ENCODE measurements at regions of chr2 and their contacts with region 1.

Region 1: GRCh38 chr2:9555297-9556141 is at the start of gene ADAM17:
- DNase-seq: peak; percentile 93
- H3K4me3 Mint-ChIP-seq: peak within 1 kb of the TSS; percentile 100
- H3K27ac Mint-ChIP-seq: peak within 1 kb of the TSS; percentile 98
- H3K4me1 Mint-ChIP-seq: peaks cover 50% of the 10 kb centered on the region
- H3K27me3 Mint-ChIP-seq: no peaks in the 10 kb centered on the region
- total RNA-seq, gene ADAM17: 24.0 to 24.7 TPM

Region 2: GRCh38 chr2:9373077-9373875 is 182.2 kb before region 1 on chr2:
- CTCF ChIA-PET with region 1: no interaction called
- POLR2A ChIA-PET with region 1: no interaction called
- intact Hi-C with region 1: loop called (anchors 1 kb)
- DNase-seq: no peak
- H3K4me3 Mint-ChIP-seq: no peak overlapping the region
- H3K27ac Mint-ChIP-seq: no peak overlapping the region
- H3K4me1 Mint-ChIP-seq: peaks cover 20% of the 10 kb centered on the region
- H3K27me3 Mint-ChIP-seq: peaks cover 9% of the 10 kb centered on the region

Region 3: DNA sequence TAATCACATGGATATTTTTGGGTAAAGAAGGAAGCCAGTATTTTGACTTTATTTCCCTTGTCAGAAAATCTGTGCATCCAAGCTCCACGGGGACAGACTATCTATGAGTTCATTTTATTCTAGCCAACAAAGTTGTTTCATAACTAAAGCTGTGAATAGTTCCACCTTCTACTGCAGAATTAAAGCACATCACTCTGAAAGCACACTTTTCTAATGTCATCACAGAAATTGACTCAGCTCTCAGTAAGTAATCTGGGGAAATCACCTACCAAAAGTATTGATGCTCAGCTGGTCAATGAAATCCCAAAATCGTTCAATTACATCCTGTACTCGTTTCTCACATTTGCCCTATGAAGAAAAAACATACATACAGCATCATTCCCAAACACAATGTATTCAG is 62.0 kb before region 1 on chr2:
- CTCF ChIA-PET with region 1: interaction called, 3 read pairs
- POLR2A ChIA-PET with region 1: interaction called, 8 read pairs
- intact Hi-C with region 1: loop called (anchors 1 kb)
- DNase-seq: no peak
- H3K4me3 Mint-ChIP-seq: no peak overlapping the region
- H3K27ac Mint-ChIP-seq: peak overlapping the region; percentile 80
- H3K4me1 Mint-ChIP-seq: peaks cover 52% of the 10 kb centered on the region
- H3K27me3 Mint-ChIP-seq: no peaks in the 10 kb centered on the region

Region 4: DNA sequence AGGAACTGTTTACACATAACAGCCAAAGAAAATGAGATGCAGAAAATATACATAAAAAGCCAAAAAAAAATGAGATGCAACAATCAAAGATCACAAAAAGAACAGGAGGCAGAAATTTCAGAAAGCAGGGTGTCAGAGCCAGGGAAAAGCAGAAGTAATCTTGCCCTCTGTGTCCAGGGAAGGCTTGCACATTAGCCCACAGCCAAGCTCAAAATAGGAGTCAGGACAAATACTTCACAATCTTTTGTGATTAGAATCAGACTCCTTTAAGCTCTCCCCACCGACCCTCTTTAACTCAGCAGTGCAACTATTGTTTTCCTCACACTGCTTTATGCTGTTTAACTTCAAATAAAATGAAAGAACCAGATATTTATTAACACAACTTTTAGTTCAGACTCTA is 46.6 kb before region 1 on chr2:
- CTCF ChIA-PET with region 1: no interaction called
- POLR2A ChIA-PET with region 1: no interaction called
- intact Hi-C with region 1: no loop called
- DNase-seq: no peak
- H3K4me3 Mint-ChIP-seq: no peak overlapping the region
- H3K27ac Mint-ChIP-seq: no peak overlapping the region
- H3K4me1 Mint-ChIP-seq: no peaks in the 10 kb centered on the region
- H3K27me3 Mint-ChIP-seq: no peaks in the 10 kb centered on the region

Region 5: GRCh38 chr2:9613291-9613690 is 57.8 kb after region 1 on chr2:
- CTCF ChIA-PET with region 1: interaction called, 4 read pairs
- POLR2A ChIA-PET with region 1: interaction called, 9 read pairs
- intact Hi-C with region 1: loop called (anchors 1 kb)
- DNase-seq: no peak
- H3K4me3 Mint-ChIP-seq: no peak overlapping the region
- H3K27ac Mint-ChIP-seq: no peak overlapping the region
- H3K4me1 Mint-ChIP-seq: peaks cover 90% of the 10 kb centered on the region
- H3K27me3 Mint-ChIP-seq: no peaks in the 10 kb centered on the region

Region 6: GRCh38 chr2:9703085-9703641 is 147.6 kb after region 1 on chr2:
- CTCF ChIA-PET with region 1: interaction called, 4 read pairs
- POLR2A ChIA-PET with region 1: interaction called, 7 read pairs
- intact Hi-C with region 1: loop called (anchors 1 kb)
- DNase-seq: peak; percentile 95
- H3K4me3 Mint-ChIP-seq: no peak overlapping the region
- H3K27ac Mint-ChIP-seq: peak overlapping the region; percentile 75
- H3K4me1 Mint-ChIP-seq: peaks cover 54% of the 10 kb centered on the region
- H3K27me3 Mint-ChIP-seq: peaks cover 3% of the 10 kb centered on the region

Region 7: GRCh38 chr2:9739531-9739964 is 184.0 kb after region 1 on chr2:
- CTCF ChIA-PET with region 1: no interaction called
- POLR2A ChIA-PET with region 1: no interaction called
- intact Hi-C with region 1: loop called (anchors 1 kb)
- DNase-seq: peak; percentile 77
- H3K4me3 Mint-ChIP-seq: peak overlapping the region; percentile 75
- H3K27ac Mint-ChIP-seq: peak overlapping the region; percentile 89
- H3K4me1 Mint-ChIP-seq: peaks cover 52% of the 10 kb centered on the region
- H3K27me3 Mint-ChIP-seq: no peaks in the 10 kb centered on the region

Region 8: GRCh38 chr2:9778012-9778411 is 222.5 kb after region 1 on chr2:
- CTCF ChIA-PET with region 1: no interaction called
- POLR2A ChIA-PET with region 1: interaction called, 5 read pairs
- intact Hi-C with region 1: loop called (anchors 5 kb)
- DNase-seq: peak; percentile 55
- H3K4me3 Mint-ChIP-seq: no peak overlapping the region
- H3K27ac Mint-ChIP-seq: peak overlapping the region; percentile 38
- H3K4me1 Mint-ChIP-seq: peaks cover 47% of the 10 kb centered on the region
- H3K27me3 Mint-ChIP-seq: no peaks in the 10 kb centered on the region

Measured in activated CD4-positive, alpha-beta memory T cell treated with anti-CD3 and anti-CD28 coated beads for 36 hours (primary cell).